Endothelial cell of umbilical vein (primary cell): ENCODE measurements at regions of chr7 and their contacts with region 1.

Region 1: GRCh38 chr7:93055543-93056107 is 62.2 kb downstream of the SAMD9 start:
- DNase-seq: peak; percentile 53
- H3K4me3 ChIP-seq: no peak overlapping the region
- H3K27ac ChIP-seq: no peak overlapping the region
- H3K4me1 ChIP-seq: no peaks in the 10 kb centered on the region
- H3K27me3 ChIP-seq: peaks cover 0 to 3% of the 10 kb centered on the region in 2 experiments
- CTCF ChIP-seq: peak; percentile 33 to 48
- POLR2A ChIP-seq: no peak

Region 2: DNA sequence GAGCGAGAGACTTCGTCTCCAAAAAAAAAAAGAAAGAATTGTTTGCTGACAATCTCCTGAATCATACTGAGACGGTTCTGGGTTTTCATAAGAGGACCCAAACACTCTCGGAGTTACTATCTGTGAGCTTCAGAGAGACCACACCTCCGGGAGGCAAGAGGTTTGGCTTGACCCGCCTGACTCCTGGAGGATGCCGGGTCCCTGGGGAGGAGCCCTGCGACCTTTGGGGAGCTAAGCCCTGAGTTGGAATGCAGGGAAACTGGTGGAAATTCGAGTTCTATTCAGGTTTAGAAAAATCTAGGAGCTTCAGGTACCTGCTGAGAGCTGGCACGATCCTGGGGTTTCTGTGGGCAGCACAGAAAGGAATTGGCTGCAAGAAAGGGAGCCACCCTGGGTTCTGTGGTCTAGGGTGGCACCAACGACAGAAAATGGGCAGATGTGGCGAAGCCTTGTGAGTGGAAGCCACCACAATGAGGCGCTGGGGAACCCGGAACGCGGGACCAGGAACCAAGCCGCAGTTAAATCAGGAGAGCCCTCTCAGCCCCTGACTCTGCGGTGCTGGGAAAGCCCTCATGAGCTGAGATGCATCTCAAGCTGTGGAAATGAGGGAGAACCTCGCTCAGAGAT is 630.2 kb before region 1 on chr7:
- CTCF ChIA-PET with region 1: no interaction called
- POLR2A ChIA-PET with region 1: no interaction called
- dilution Hi-C with region 1: no loop called
- intact Hi-C with region 1: loop called (anchors 1 kb)
- DNase-seq: no peak
- H3K4me3 ChIP-seq: no peak overlapping the region
- H3K27ac ChIP-seq: no peak overlapping the region
- H3K4me1 ChIP-seq: no peaks in the 10 kb centered on the region
- H3K27me3 ChIP-seq: peaks cover 3 to 9% of the 10 kb centered on the region in 2 experiments
- CTCF ChIP-seq: peak in 1 of 2 donors; percentile 13
- POLR2A ChIP-seq: no peak

Region 3: DNA sequence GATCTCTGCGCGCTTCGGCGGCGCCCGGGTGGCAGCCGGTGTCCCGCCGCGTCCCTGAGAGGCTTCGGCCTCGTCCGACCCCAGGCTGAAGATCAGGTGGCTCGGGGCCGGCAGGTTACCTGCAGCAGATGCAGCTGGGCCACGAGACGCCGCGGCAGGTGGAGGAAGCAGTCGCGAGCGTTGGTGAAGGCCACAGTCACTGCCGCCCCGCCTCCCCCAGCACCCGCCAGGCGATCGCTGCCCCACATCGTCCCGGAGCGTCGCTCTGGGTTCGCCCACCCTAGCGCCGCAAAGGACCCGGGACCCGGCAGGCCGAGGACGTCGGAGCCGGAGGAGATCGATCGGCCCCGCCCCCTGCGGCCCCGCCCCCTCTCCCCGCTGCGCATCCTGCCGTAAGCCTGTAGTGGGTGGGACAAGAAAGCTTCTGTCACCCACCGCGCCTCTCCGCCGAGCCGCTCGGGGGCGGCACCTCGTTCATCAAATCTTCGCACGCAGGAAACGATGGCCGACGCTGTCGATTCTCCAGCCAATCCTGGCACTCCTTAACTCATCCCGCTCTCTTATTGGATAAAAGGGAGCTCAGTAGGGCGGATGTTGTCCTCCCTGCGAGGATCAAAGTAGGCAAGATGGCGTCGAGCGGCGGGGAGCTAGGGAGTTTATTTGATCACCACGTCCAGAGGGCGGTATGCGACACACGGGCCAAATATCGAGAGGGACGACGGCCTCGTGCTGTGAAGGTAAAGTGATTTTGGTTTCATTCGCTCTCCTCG is 527.3 kb before region 1 on chr7 and contains the starts of genes PEX1 and RBM48:
- CTCF ChIA-PET with region 1: no interaction called
- POLR2A ChIA-PET with region 1: no interaction called
- dilution Hi-C with region 1: no loop called
- intact Hi-C with region 1: loop called (anchors 5 kb)
- DNase-seq: peak; percentile 100
- H3K4me3 ChIP-seq: peak within 1 kb of the TSS; percentile 88 to 100 (median 95)
- H3K27ac ChIP-seq: peak within 1 kb of the TSS; percentile 91
- H3K4me1 ChIP-seq: peaks cover 15% of the 10 kb centered on the region
- H3K27me3 ChIP-seq: no peaks in the 10 kb centered on the region
- CTCF ChIP-seq: peak; percentile 34 to 50
- POLR2A ChIP-seq: peak; percentile 70
- total RNA-seq, gene PEX1: 10.7 and 11.7 TPM in 2 replicates
- total RNA-seq, gene RBM48: 12.0 and 13.1 TPM in 2 replicates

Region 4: DNA sequence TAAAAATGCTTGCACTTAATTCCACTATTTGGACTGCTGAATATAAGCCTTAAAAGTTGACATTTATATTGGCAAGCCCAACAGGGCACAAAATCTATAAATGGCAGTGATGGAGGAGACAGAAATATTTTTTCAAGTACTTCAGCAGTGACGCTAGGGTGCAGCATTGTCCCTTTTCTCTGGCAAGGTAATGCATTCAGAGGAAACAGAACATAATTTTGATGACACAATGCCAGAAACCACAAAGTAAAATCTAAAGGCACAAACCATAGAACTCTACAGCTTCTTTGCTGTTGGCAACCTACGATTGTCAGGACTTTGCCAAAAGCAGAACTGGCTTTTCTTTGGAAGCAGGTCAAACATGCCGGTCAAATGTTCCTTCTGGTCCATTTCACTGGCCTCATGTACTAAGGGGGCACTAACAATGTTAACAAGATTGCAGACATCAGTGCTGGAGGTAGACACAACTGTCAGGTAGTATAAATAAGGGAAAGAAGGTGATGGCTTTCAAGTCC is 434.5 kb before region 1 on chr7:
- CTCF ChIA-PET with region 1: interaction called, 12 read pairs
- POLR2A ChIA-PET with region 1: no interaction called
- dilution Hi-C with region 1: no loop called
- intact Hi-C with region 1: loop called (anchors 1 kb)
- DNase-seq: peak; percentile 90
- H3K4me3 ChIP-seq: no peak overlapping the region
- H3K27ac ChIP-seq: peak overlapping the region; percentile 75
- H3K4me1 ChIP-seq: peaks cover 23% of the 10 kb centered on the region
- H3K27me3 ChIP-seq: no peaks in the 10 kb centered on the region
- CTCF ChIP-seq: peak; percentile 53 to 64
- POLR2A ChIP-seq: no peak

Region 5: GRCh38 chr7:92698237-92698841 is 357.3 kb before region 1 on chr7:
- CTCF ChIA-PET with region 1: interaction called, 3 read pairs
- POLR2A ChIA-PET with region 1: no interaction called
- dilution Hi-C with region 1: no loop called
- intact Hi-C with region 1: loop called (anchors 1 kb)
- DNase-seq: peak; percentile 95
- H3K4me3 ChIP-seq: peak overlapping the region in 1 of 3 experiments; percentile 1
- H3K27ac ChIP-seq: peak overlapping the region; percentile 75
- H3K4me1 ChIP-seq: peaks cover 44% of the 10 kb centered on the region
- H3K27me3 ChIP-seq: no peaks in the 10 kb centered on the region
- CTCF ChIP-seq: no peak
- POLR2A ChIP-seq: peak; percentile 35

Region 6: GRCh38 chr7:92988051-92988450 is 67.6 kb before region 1 on chr7:
- CTCF ChIA-PET with region 1: no interaction called
- POLR2A ChIA-PET with region 1: no interaction called
- dilution Hi-C with region 1: no loop called
- intact Hi-C with region 1: loop called (anchors 2 kb)
- DNase-seq: peak; percentile 57
- H3K4me3 ChIP-seq: no peak overlapping the region
- H3K27ac ChIP-seq: no peak overlapping the region
- H3K4me1 ChIP-seq: no peaks in the 10 kb centered on the region
- H3K27me3 ChIP-seq: no peaks in the 10 kb centered on the region
- CTCF ChIP-seq: peak; percentile 26 to 33
- POLR2A ChIP-seq: no peak

Region 7: DNA sequence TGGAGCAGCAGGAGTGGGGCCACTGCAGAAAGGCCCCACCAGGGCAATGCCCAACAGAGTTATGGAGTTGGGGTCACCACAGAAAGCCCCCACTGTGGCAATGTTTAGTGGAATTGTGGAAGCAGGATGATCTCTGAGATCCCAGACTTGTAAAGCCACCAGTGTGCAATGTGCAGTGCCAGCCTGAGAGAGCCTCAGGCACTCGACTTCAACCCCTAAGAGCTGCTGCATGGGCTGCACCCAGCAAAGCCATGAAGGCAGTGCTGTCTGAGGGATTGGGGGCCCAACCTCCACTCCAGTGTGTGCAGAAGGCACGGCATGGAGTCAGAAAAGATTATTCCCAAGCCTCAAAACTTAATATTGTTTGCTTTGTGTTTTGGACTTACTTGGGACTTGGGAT is 41.8 kb after region 1 on chr7:
- CTCF ChIA-PET with region 1: no interaction called
- POLR2A ChIA-PET with region 1: no interaction called
- dilution Hi-C with region 1: no loop called
- intact Hi-C with region 1: no loop called
- DNase-seq: no peak
- H3K4me3 ChIP-seq: no peak overlapping the region
- H3K27ac ChIP-seq: no peak overlapping the region
- H3K4me1 ChIP-seq: no peaks in the 10 kb centered on the region
- H3K27me3 ChIP-seq: peaks cover 2 to 11% of the 10 kb centered on the region in 2 experiments
- CTCF ChIP-seq: no peak
- POLR2A ChIP-seq: no peak